ENCODE measurements at regions of chr10 and their contacts with region 1.

Region 1: DNA sequence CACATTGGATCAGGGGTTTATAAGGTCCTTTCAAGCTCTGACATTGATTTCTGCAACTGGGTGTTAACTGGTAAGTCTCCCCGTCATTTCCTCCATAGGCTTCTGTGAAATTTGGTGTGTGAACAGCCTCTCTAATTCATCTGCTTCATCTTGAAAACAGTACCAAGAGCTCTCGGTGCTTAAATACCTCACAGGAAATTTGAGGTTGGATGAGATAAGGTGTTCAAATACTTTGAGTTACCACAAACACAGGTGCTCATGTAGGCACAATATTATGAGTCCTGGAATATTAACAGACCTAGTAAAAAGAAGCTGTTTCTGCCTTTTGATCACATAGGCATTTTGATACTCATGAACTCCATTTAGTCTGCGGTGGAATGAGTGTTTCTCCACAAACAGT is 85.2 kb downstream of the RTKN2 start:
- DNase-seq: peak; percentile 68
- H3K4me3 Mint-ChIP-seq: no peak overlapping the region
- H3K27ac Mint-ChIP-seq: peak overlapping the region; percentile 99
- H3K4me1 Mint-ChIP-seq: peaks cover 88% of the 10 kb centered on the region
- H3K27me3 Mint-ChIP-seq: no peaks in the 10 kb centered on the region

Region 2: DNA sequence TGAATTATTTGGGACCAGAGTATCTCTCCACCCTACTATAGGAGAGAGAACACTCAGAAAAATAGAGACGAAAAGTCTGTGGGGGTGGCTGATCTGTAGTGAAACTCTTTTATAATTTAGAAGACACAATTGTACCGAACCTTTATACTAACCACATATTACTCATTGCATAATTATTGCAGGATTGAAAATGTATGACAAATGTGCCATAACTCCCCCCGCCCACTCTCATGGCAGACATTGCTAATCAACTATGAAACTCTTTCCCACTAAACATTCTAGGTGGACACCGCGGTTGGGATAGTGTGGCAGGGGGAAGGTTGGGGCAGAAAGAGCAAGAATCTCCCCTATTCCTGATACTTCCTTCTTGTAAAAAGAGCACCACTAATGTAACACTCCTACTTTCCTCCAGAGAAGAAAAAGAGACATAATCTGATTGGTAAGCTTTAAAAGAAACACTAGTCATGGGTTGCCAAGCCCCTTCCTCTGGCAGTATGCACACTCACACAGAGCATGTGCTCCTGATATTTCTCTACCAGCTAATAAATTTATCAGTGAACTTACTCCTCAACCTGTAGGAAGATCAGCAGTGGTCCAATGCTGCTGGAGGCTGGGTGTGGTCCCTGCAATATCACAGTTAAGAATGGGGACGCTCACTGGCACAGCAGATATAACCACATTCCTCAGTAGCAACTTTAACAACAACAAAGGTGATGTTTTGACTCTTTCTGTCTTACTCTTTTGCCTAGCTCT is 300.6 kb before region 1 on chr10:
- CTCF ChIA-PET with region 1: no interaction called
- intact Hi-C with region 1: loop called (anchors 1 kb)
- DNase-seq: peak; percentile 88
- H3K4me3 Mint-ChIP-seq: no peak overlapping the region
- H3K27ac Mint-ChIP-seq: peak overlapping the region; percentile 83
- H3K4me1 Mint-ChIP-seq: peaks cover 30% of the 10 kb centered on the region
- H3K27me3 Mint-ChIP-seq: no peaks in the 10 kb centered on the region

Region 3: DNA sequence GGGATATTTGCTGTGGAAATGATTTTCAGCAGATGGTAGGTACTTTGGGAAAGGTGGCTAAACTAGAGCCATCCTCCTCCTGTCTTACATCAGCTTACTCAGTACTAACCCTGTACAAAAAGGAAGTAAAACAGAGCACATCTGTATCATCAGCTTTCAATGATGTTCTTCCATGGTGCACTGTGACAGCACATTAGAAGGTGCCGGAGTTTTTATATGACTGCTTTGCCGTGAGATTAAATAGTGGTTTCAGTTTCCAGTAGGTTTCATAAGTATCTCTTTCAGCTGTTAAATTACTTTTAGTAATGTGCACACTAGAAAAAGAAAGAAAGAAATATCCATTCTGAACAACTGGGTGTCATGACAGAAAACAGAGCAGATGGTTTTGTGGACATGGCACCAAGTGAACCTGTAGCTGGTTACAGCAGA is 195.5 kb before region 1 on chr10:
- CTCF ChIA-PET with region 1: interaction called, 4 read pairs
- intact Hi-C with region 1: loop called (anchors 1 kb)
- DNase-seq: peak; percentile 64
- H3K4me3 Mint-ChIP-seq: peak overlapping the region; percentile 51
- H3K27ac Mint-ChIP-seq: peak overlapping the region; percentile 96
- H3K4me1 Mint-ChIP-seq: peaks cover 89% of the 10 kb centered on the region
- H3K27me3 Mint-ChIP-seq: no peaks in the 10 kb centered on the region

Region 4: DNA sequence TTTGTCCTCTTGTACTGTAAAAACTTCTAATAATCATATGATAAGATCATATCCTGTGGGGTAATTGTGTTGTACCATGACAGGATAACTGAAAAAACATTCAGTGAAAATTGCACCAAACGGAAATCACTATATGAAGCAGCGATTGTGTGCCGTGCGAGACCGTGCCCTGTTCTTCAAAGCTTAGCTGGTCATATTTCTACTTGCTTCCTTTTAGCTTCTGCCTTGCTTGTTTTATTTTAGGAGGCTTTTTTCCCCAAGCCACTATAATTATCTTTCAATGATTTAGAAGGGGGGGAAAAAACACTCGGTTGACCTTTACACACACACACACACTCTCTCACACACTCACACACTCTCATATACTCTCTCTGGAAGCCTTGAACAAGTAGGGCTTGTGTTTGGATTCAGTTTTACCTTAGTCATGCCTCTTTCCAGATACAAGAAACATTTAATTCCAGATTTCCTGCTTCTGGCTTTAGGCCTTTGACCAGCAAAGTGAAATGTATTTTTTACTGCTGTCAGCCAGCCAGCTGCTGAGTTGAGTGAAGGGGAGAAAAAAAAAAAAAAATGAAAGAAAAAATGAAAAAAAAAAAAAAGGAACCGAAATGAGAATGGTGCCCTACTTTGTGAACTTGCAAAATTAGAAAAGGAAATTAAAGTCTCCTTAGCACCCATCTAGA is 100.6 kb before region 1 on chr10:
- CTCF ChIA-PET with region 1: interaction called, 4 read pairs
- intact Hi-C with region 1: loop called (anchors 1 kb)
- DNase-seq: peak; percentile 80
- H3K4me3 Mint-ChIP-seq: peak overlapping the region; percentile 41
- H3K27ac Mint-ChIP-seq: peak overlapping the region; percentile 89
- H3K4me1 Mint-ChIP-seq: peaks cover 86% of the 10 kb centered on the region
- H3K27me3 Mint-ChIP-seq: no peaks in the 10 kb centered on the region

Region 5: GRCh38 chr10:62224606-62225005 is 41.2 kb after region 1 on chr10:
- CTCF ChIA-PET with region 1: interaction called, 3 read pairs
- intact Hi-C with region 1: loop called (anchors 1 kb)
- DNase-seq: no peak
- H3K4me3 Mint-ChIP-seq: no peak overlapping the region
- H3K27ac Mint-ChIP-seq: peak overlapping the region; percentile 86
- H3K4me1 Mint-ChIP-seq: peaks cover 10% of the 10 kb centered on the region
- H3K27me3 Mint-ChIP-seq: no peaks in the 10 kb centered on the region

Region 6: GRCh38 chr10:62637249-62638061 is 454.0 kb after region 1 on chr10:
- CTCF ChIA-PET with region 1: no interaction called
- intact Hi-C with region 1: loop called (anchors 5 kb)
- DNase-seq: peak; percentile 81
- H3K4me3 Mint-ChIP-seq: no peak overlapping the region
- H3K27ac Mint-ChIP-seq: no peak overlapping the region
- H3K4me1 Mint-ChIP-seq: peaks cover 14% of the 10 kb centered on the region
- H3K27me3 Mint-ChIP-seq: no peaks in the 10 kb centered on the region

Region 7: GRCh38 chr10:63268798-63269503 is 1085.5 kb after region 1 on chr10:
- CTCF ChIA-PET with region 1: no interaction called
- intact Hi-C with region 1: loop called (anchors 5 kb)
- DNase-seq: peak; percentile 91
- H3K4me3 Mint-ChIP-seq: peak overlapping the region; percentile 88
- H3K27ac Mint-ChIP-seq: peak overlapping the region; percentile 98
- H3K4me1 Mint-ChIP-seq: peaks cover 22% of the 10 kb centered on the region
- H3K27me3 Mint-ChIP-seq: no peaks in the 10 kb centered on the region

Measured in activated naive CD4-positive, alpha-beta T cell treated with anti-CD3 and anti-CD28 coated beads for 36 hours (primary cell).